ENCODE measurements at regions of chr5 and their contacts with region 1.

Region 1: GRCh38 chr5:77980677-77981076 is 204.5 kb upstream of the TBCA start:
- DNase-seq: no peak
- H3K4me3 ChIP-seq: no peak overlapping the region
- H3K27ac ChIP-seq: no peak overlapping the region
- H3K27me3 ChIP-seq: peaks cover 31% of the 10 kb centered on the region
- CTCF ChIP-seq: no peak

Region 2: GRCh38 chr5:77943851-77944250 is 36.8 kb before region 1 on chr5:
- CTCF ChIA-PET with region 1: no interaction called
- POLR2A ChIA-PET with region 1: interaction called, 16 read pairs
- DNase-seq: no peak
- H3K4me3 ChIP-seq: no peak overlapping the region
- H3K27ac ChIP-seq: no peak overlapping the region
- H3K27me3 ChIP-seq: peaks cover 22% of the 10 kb centered on the region
- CTCF ChIP-seq: no peak

Measured in AG04450 (cell line).